HCT116 (cell line): ENCODE measurements at regions of chr2 and their contacts with region 1.

Region 1: GRCh38 chr2:54899576-54900200 is 150.6 kb downstream of the RTN4 start:
- DNase-seq: peak; percentile 21
- ATAC-seq: no peak
- H3K4me3 ChIP-seq: no peak overlapping the region
- H3K27ac ChIP-seq: no peak overlapping the region
- H3K4me1 ChIP-seq: peaks cover 13 to 23% of the 10 kb centered on the region in 2 experiments
- H3K27me3 ChIP-seq: no peaks in the 10 kb centered on the region
- CTCF ChIP-seq: peak; percentile 55 to 75 (median 65); a peak in 5 of 6 replicates
- POLR2A ChIP-seq: no peak
- RAD21 ChIP-seq: peak; percentile 88

Region 2: GRCh38 chr2:54589340-54590215 is 310.1 kb before region 1 on chr2:
- CTCF ChIA-PET with region 1: no interaction called
- POLR2A ChIA-PET with region 1: no interaction called
- RAD21 ChIA-PET with region 1: no interaction called
- intact Hi-C with region 1: no loop called
- DNase-seq: no peak
- ATAC-seq: no peak
- H3K4me3 ChIP-seq: no peak overlapping the region
- H3K27ac ChIP-seq: no peak overlapping the region
- H3K4me1 ChIP-seq: no peaks in the 10 kb centered on the region
- H3K27me3 ChIP-seq: no peaks in the 10 kb centered on the region
- CTCF ChIP-seq: no peak
- POLR2A ChIP-seq: no peak
- RAD21 ChIP-seq: no peak

Region 3: DNA sequence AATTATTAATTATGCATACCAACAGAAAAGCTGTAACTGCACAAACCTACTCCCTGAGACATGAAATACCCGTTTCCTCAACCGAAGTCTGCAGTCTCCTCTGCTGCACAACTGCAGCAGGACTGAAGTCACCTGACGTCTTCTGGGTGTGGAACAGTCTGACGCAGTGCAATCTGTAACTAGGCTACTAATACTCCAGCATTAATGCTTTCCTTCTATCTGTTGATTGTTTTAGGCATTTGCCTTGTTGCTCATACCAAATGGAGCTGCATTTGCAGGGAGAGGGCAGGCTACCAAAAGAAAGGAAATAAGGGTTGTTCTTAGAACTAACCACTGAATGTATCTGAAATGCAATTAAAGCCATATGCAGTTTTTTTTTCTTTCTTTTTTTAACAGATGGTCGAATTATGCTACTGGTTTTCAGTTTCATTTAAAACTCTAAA is 110.5 kb after region 1 on chr2:
- CTCF ChIA-PET with region 1: interaction called, 3 read pairs
- POLR2A ChIA-PET with region 1: no interaction called
- RAD21 ChIA-PET with region 1: no interaction called
- intact Hi-C with region 1: loop called (anchors 10 kb)
- DNase-seq: no peak
- ATAC-seq: no peak
- H3K4me3 ChIP-seq: no peak overlapping the region
- H3K27ac ChIP-seq: no peak overlapping the region
- H3K4me1 ChIP-seq: peaks cover 22 to 36% of the 10 kb centered on the region in 2 experiments
- H3K27me3 ChIP-seq: no peaks in the 10 kb centered on the region
- CTCF ChIP-seq: no peak
- POLR2A ChIP-seq: no peak
- RAD21 ChIP-seq: no peak

Region 4: GRCh38 chr2:55168221-55169154 is 268.8 kb after region 1 on chr2:
- CTCF ChIA-PET with region 1: interaction called, 46 read pairs
- POLR2A ChIA-PET with region 1: no interaction called
- RAD21 ChIA-PET with region 1: interaction called, 3 to 6 read pairs
- intact Hi-C with region 1: no loop called
- DNase-seq: peak; percentile 29
- ATAC-seq: peak; percentile 86
- H3K4me3 ChIP-seq: no peak overlapping the region
- H3K27ac ChIP-seq: no peak overlapping the region
- H3K4me1 ChIP-seq: peaks cover 0 to 6% of the 10 kb centered on the region in 2 experiments; a peak in 2 of 4 replicates
- H3K27me3 ChIP-seq: no peaks in the 10 kb centered on the region
- CTCF ChIP-seq: peak; percentile 70 to 89 (median 87)
- POLR2A ChIP-seq: no peak
- RAD21 ChIP-seq: peak; percentile 94

Region 5: GRCh38 chr2:55232084-55232862 is 332.6 kb after region 1 on chr2 and contains the starts of genes CLHC1 and RPS27A:
- CTCF ChIA-PET with region 1: no interaction called
- POLR2A ChIA-PET with region 1: no interaction called
- RAD21 ChIA-PET with region 1: interaction called in 1 of 2 experiments, 10 read pairs
- intact Hi-C with region 1: loop called (anchors 2 kb)
- DNase-seq: peak; percentile 98
- ATAC-seq: peak; percentile 89
- H3K4me3 ChIP-seq: peak within 1 kb of the TSS; percentile 77 to 91
- H3K27ac ChIP-seq: peak within 1 kb of the TSS; percentile 98
- H3K4me1 ChIP-seq: peaks cover 8 to 21% of the 10 kb centered on the region in 2 experiments
- H3K27me3 ChIP-seq: no peaks in the 10 kb centered on the region
- CTCF ChIP-seq: no peak
- POLR2A ChIP-seq: peak; percentile 73
- RAD21 ChIP-seq: no peak
- total RNA-seq, gene CLHC1: 11.1 TPM
- total RNA-seq, gene RPS27A: 1,291 TPM